Activated CD4-positive, alpha-beta memory T cell treated with anti-CD3 and anti-CD28 coated beads for 36 hours (primary cell): ENCODE measurements at regions of chr7 and their contacts with region 1.

Region 1: GRCh38 chr7:104956753-104957450 is 57.1 kb upstream of the KMT2E start:
- DNase-seq: peak; percentile 60
- H3K4me3 Mint-ChIP-seq: peak overlapping the region; percentile 33
- H3K27ac Mint-ChIP-seq: peak overlapping the region; percentile 94
- H3K4me1 Mint-ChIP-seq: peaks cover 47% of the 10 kb centered on the region
- H3K27me3 Mint-ChIP-seq: no peaks in the 10 kb centered on the region

Region 2: GRCh38 chr7:105098863-105099515 is 142.1 kb after region 1 on chr7:
- CTCF ChIA-PET with region 1: no interaction called
- POLR2A ChIA-PET with region 1: no interaction called
- intact Hi-C with region 1: loop called (anchors 1 kb)
- DNase-seq: no peak
- H3K4me3 Mint-ChIP-seq: no peak overlapping the region
- H3K27ac Mint-ChIP-seq: peak overlapping the region; percentile 24
- H3K4me1 Mint-ChIP-seq: peaks cover 63% of the 10 kb centered on the region
- H3K27me3 Mint-ChIP-seq: no peaks in the 10 kb centered on the region

Region 3: GRCh38 chr7:105198223-105198622 is 241.3 kb after region 1 on chr7:
- CTCF ChIA-PET with region 1: no interaction called
- POLR2A ChIA-PET with region 1: no interaction called
- intact Hi-C with region 1: no loop called
- DNase-seq: no peak
- H3K4me3 Mint-ChIP-seq: no peak overlapping the region
- H3K27ac Mint-ChIP-seq: no peak overlapping the region
- H3K4me1 Mint-ChIP-seq: peaks cover 12% of the 10 kb centered on the region
- H3K27me3 Mint-ChIP-seq: no peaks in the 10 kb centered on the region

Region 4: DNA sequence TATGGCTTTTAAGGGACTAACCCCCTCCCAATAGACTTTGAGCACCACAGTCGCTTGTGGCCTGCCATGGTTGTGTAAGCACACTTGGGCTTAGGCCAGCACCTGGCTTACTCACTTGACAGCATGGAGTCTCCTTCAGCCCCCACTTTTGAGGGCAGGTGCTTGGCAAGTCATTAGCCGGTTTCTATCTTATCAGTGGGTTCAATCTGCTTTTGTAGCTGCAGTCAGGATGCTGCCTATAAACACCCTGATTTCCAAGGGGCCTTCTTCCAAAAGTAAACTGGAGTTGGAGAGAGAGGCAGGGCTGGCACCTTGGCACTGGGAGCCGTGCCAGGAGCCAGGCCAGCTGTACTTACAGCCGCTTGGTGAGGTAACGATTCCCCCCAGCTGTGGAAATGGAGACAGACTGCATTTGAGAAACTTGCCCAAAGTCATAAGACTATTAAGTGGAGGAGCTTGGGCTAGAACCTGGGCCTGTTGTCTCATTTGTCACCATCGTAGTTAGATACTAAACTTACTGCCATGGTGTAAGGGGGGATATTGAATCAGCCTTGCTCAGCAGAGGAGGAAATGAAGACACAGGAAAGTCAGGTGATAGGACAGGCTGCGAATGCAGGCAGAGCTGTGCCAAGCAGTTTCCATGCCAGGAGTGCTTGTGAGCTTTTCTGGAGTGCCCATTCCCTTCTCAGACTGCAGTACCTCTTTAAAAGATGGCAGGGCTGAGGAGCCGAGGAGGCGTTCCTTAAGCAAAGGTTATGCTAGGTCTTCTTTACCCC is 716.7 kb after region 1 on chr7:
- CTCF ChIA-PET with region 1: no interaction called
- POLR2A ChIA-PET with region 1: no interaction called
- intact Hi-C with region 1: no loop called
- DNase-seq: peak; percentile 38
- H3K4me3 Mint-ChIP-seq: no peak overlapping the region
- H3K27ac Mint-ChIP-seq: peak overlapping the region; percentile 95
- H3K4me1 Mint-ChIP-seq: peaks cover 63% of the 10 kb centered on the region
- H3K27me3 Mint-ChIP-seq: no peaks in the 10 kb centered on the region